Activated CD4-positive, alpha-beta memory T cell treated with anti-CD3 and anti-CD28 coated beads for 36 hours (primary cell): ENCODE measurements at regions of chr7 and their contacts with region 1.

Region 1: GRCh38 chr7:129271500-129272355 is 46.9 kb downstream of the AHCYL2 start:
- DNase-seq: peak; percentile 71
- H3K4me3 Mint-ChIP-seq: peak overlapping the region; percentile 54
- H3K27ac Mint-ChIP-seq: no peak overlapping the region
- H3K4me1 Mint-ChIP-seq: peaks cover 6% of the 10 kb centered on the region
- H3K27me3 Mint-ChIP-seq: no peaks in the 10 kb centered on the region

Region 2: GRCh38 chr7:129163875-129164544 is 107.7 kb before region 1 on chr7:
- CTCF ChIA-PET with region 1: interaction called, 17 read pairs
- POLR2A ChIA-PET with region 1: no interaction called
- intact Hi-C with region 1: no loop called
- DNase-seq: no peak
- H3K4me3 Mint-ChIP-seq: no peak overlapping the region
- H3K27ac Mint-ChIP-seq: no peak overlapping the region
- H3K4me1 Mint-ChIP-seq: peaks cover 7% of the 10 kb centered on the region
- H3K27me3 Mint-ChIP-seq: peaks cover 14% of the 10 kb centered on the region

Region 3: GRCh38 chr7:129224251-129225205 is 47.2 kb before region 1 on chr7 and contains the start of gene AHCYL2:
- CTCF ChIA-PET with region 1: interaction called, 318 read pairs
- POLR2A ChIA-PET with region 1: no interaction called
- intact Hi-C with region 1: loop called (anchors 1 kb)
- DNase-seq: peak; percentile 99
- H3K4me3 Mint-ChIP-seq: peak within 1 kb of the TSS; percentile 87
- H3K27ac Mint-ChIP-seq: peak within 1 kb of the TSS; percentile 91
- H3K4me1 Mint-ChIP-seq: peaks cover 27% of the 10 kb centered on the region
- H3K27me3 Mint-ChIP-seq: no peaks in the 10 kb centered on the region
- total RNA-seq, gene AHCYL2: 16.4 to 17.1 TPM

Region 4: GRCh38 chr7:129258649-129259389 is 12.9 kb before region 1 on chr7:
- CTCF ChIA-PET with region 1: interaction called, 14 read pairs
- POLR2A ChIA-PET with region 1: no interaction called
- intact Hi-C with region 1: no loop called
- DNase-seq: no peak
- H3K4me3 Mint-ChIP-seq: no peak overlapping the region
- H3K27ac Mint-ChIP-seq: no peak overlapping the region
- H3K4me1 Mint-ChIP-seq: peaks cover 26% of the 10 kb centered on the region
- H3K27me3 Mint-ChIP-seq: no peaks in the 10 kb centered on the region

Region 5: DNA sequence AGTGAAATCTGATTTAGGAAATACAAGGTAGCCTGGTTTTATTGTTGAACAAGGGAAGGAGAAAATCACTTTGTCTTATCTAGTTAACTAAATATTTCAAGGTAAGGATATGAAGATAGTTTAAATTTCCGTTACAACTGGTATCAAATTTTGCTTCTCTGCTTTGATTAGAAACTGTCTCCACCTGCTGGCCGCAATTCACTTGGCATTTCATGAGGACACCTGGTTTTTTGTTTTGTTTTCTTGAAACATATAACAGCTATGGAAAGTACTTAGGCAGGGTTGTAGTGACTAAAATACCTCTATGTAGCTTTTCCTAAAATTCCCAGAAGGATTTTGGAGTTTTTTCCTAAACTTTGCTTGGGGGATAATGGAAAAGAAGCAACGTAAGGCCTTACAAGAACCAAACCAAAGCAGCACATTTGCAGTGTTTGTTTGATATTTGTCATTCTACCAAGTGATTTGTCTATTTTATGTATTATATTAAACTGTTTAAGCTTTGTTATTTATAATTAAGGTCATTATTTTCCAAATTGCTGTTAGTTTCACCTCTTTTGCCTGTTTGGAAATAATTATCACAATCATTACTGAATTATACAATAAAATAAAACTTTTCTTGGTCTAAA is 26.7 kb after region 1 on chr7:
- CTCF ChIA-PET with region 1: interaction called, 14 read pairs
- POLR2A ChIA-PET with region 1: no interaction called
- intact Hi-C with region 1: no loop called
- DNase-seq: peak; percentile 62
- H3K4me3 Mint-ChIP-seq: no peak overlapping the region
- H3K27ac Mint-ChIP-seq: no peak overlapping the region
- H3K4me1 Mint-ChIP-seq: peaks cover 2% of the 10 kb centered on the region
- H3K27me3 Mint-ChIP-seq: no peaks in the 10 kb centered on the region

Region 6: GRCh38 chr7:129343099-129343700 is 71.5 kb after region 1 on chr7:
- CTCF ChIA-PET with region 1: no interaction called
- POLR2A ChIA-PET with region 1: no interaction called
- intact Hi-C with region 1: no loop called
- DNase-seq: no peak
- H3K4me3 Mint-ChIP-seq: no peak overlapping the region
- H3K27ac Mint-ChIP-seq: no peak overlapping the region
- H3K4me1 Mint-ChIP-seq: peaks cover 30% of the 10 kb centered on the region
- H3K27me3 Mint-ChIP-seq: no peaks in the 10 kb centered on the region